Caco-2 (cell line): ENCODE measurements at regions of chr2 and their contacts with region 1.

Region 1: GRCh38 chr2:18299423-18300212 is 260.8 kb downstream of the RDH14 start:
- DNase-seq: peak; percentile 85 to 91
- H3K4me3 ChIP-seq: 0 out of 2 replicates have a peak overlapping the region, but pooled peaks have one; percentile 9
- H3K4me3 Mint-ChIP-seq: peak overlapping the region; percentile 72
- H3K27ac Mint-ChIP-seq: peak overlapping the region; percentile 94
- H3K4me1 ChIP-seq: peaks cover 38% of the 10 kb centered on the region
- H3K4me1 Mint-ChIP-seq: peaks cover 18% of the 10 kb centered on the region
- H3K27me3 ChIP-seq: no peaks in the 10 kb centered on the region
- H3K27me3 Mint-ChIP-seq: no peaks in the 10 kb centered on the region
- CTCF ChIP-seq: no peak

Region 2: GRCh38 chr2:17672583-17673317 is 626.9 kb before region 1 on chr2:
- CTCF ChIA-PET with region 1: no interaction called
- POLR2A ChIA-PET with region 1: no interaction called
- intact Hi-C with region 1: no loop called
- DNase-seq: no peak
- H3K4me3 ChIP-seq: no peak overlapping the region
- H3K4me3 Mint-ChIP-seq: no peak overlapping the region
- H3K27ac Mint-ChIP-seq: no peak overlapping the region
- H3K4me1 ChIP-seq: no peaks in the 10 kb centered on the region
- H3K4me1 Mint-ChIP-seq: no peaks in the 10 kb centered on the region
- H3K27me3 ChIP-seq: no peaks in the 10 kb centered on the region
- H3K27me3 Mint-ChIP-seq: no peaks in the 10 kb centered on the region
- CTCF ChIP-seq: no peak

Region 3: DNA sequence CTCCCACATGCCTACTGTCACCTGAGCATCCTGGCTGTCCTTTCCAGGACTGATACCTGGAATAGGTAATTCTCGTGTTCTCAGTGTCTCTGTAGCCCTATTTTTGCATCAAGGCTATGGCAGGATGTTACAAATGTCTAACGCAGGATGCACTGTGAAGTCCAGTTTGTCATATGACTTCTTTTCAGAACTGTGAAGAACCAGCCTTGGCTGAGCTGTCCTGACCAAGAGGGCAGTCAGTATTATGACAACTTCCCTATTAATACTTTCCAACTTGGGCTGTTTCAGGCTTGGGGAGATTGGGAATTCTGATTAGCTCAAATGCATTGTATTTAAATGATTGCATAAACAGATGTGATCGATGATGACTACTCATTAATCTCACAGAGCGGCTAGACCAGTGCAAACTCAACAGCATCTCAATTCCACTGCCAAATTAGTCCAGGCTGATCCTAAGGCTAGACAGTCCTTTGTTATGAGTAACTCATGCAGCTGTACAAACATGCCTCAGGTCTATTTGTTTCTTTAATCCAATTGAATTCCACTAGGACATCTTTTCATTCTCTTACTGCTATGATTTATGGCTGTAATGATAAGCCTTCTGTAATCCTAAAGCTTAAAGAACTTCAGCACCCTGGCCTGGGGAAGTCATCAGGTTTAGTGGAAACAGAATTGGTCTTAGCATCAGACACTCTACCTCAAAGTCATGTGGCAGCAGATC is 89.5 kb before region 1 on chr2:
- CTCF ChIA-PET with region 1: no interaction called
- POLR2A ChIA-PET with region 1: no interaction called
- intact Hi-C with region 1: loop called (anchors 1 kb)
- DNase-seq: peak; percentile 67 to 79
- H3K4me3 ChIP-seq: no peak overlapping the region
- H3K4me3 Mint-ChIP-seq: peak overlapping the region; percentile 36
- H3K27ac Mint-ChIP-seq: peak overlapping the region; percentile 56
- H3K4me1 ChIP-seq: peaks cover 30% of the 10 kb centered on the region
- H3K4me1 Mint-ChIP-seq: peaks cover 21% of the 10 kb centered on the region
- H3K27me3 ChIP-seq: no peaks in the 10 kb centered on the region
- H3K27me3 Mint-ChIP-seq: no peaks in the 10 kb centered on the region
- CTCF ChIP-seq: no peak

Region 4: GRCh38 chr2:18232731-18233438 is 66.7 kb before region 1 on chr2:
- CTCF ChIA-PET with region 1: no interaction called
- POLR2A ChIA-PET with region 1: no interaction called
- intact Hi-C with region 1: loop called (anchors 2 kb)
- DNase-seq: peak in 1 of 2 experiments; percentile 18
- H3K4me3 ChIP-seq: no peak overlapping the region
- H3K4me3 Mint-ChIP-seq: peak overlapping the region; percentile 0
- H3K27ac Mint-ChIP-seq: peak overlapping the region; percentile 40
- H3K4me1 ChIP-seq: peaks cover 29% of the 10 kb centered on the region
- H3K4me1 Mint-ChIP-seq: peaks cover 19% of the 10 kb centered on the region
- H3K27me3 ChIP-seq: no peaks in the 10 kb centered on the region
- H3K27me3 Mint-ChIP-seq: no peaks in the 10 kb centered on the region
- CTCF ChIP-seq: no peak

Region 5: DNA sequence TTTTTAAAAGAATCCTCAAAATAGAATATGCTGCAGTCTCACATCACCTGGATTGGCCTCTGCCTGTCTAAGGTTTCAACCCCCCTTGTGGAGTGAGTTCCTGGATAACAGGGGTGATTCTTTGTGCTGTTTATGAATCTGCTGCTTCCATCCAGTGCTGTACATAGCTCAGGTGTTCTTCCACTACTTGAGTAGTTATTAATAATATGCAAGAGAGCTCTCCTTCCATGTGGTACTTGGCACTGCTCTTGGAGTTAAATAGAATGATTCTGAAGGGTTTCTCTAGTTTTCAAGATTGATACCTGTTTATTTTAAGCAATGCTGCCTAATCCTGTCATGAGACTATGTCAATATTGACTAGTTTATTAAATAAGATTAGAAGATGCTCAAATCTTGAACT is 12.7 kb before region 1 on chr2:
- CTCF ChIA-PET with region 1: no interaction called
- POLR2A ChIA-PET with region 1: no interaction called
- intact Hi-C with region 1: loop called (anchors 1 kb)
- DNase-seq: no peak
- H3K4me3 ChIP-seq: no peak overlapping the region
- H3K4me3 Mint-ChIP-seq: no peak overlapping the region
- H3K27ac Mint-ChIP-seq: no peak overlapping the region
- H3K4me1 ChIP-seq: peaks cover 12% of the 10 kb centered on the region
- H3K4me1 Mint-ChIP-seq: peaks cover 17% of the 10 kb centered on the region
- H3K27me3 ChIP-seq: no peaks in the 10 kb centered on the region
- H3K27me3 Mint-ChIP-seq: no peaks in the 10 kb centered on the region
- CTCF ChIP-seq: no peak

Region 6: DNA sequence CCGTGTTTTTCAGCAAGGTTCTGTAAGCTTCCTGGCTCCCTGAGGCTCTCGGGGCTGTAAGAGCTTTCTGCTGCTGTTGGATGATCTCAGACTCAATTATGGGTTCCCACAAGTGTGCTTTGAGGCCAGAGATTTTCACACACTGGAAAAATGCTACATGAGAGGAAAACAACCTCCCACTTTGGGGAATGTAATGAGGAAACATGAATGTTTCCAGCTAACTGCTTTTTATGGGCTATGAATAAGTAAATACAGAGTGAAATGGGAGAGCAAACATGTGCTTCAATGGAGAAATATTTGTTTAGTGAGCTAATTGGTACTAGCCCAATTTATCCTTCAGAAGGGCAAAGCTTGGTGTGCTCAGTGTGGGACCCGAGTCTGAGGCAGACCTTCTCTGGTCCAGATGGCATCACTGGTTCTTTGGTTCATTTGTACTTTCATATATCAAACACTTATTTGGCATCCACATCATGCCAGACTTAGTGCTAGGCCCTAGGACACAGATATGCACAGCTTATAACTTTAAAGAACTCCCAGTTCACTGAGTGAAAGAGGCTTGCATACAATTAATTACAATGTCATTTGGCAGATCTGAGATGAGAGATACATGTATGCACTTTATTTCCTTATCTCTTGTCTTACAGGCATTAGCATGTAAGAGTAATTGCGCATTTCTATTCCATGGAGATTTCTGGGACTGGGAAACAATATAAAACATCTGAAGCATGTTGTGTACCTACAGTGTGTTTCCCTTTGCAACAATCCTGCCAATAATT is 12.0 kb after region 1 on chr2:
- CTCF ChIA-PET with region 1: no interaction called
- POLR2A ChIA-PET with region 1: no interaction called
- intact Hi-C with region 1: loop called (anchors 1 kb)
- DNase-seq: peak in 1 of 2 experiments; percentile 8
- H3K4me3 ChIP-seq: no peak overlapping the region
- H3K4me3 Mint-ChIP-seq: no peak overlapping the region
- H3K27ac Mint-ChIP-seq: peak overlapping the region; percentile 4
- H3K4me1 ChIP-seq: peaks cover 12% of the 10 kb centered on the region
- H3K4me1 Mint-ChIP-seq: peaks cover 20% of the 10 kb centered on the region
- H3K27me3 ChIP-seq: no peaks in the 10 kb centered on the region
- H3K27me3 Mint-ChIP-seq: no peaks in the 10 kb centered on the region
- CTCF ChIP-seq: no peak